ENCODE measurements at regions of chr2 and their contacts with region 1.

Region 1: GRCh38 chr2:168455648-168456520 is at the start of gene CERS6:
- DNase-seq: peak; percentile 95 to 98
- H3K4me3 ChIP-seq: peak within 1 kb of the TSS; percentile 69 to 91
- H3K27ac ChIP-seq: peak within 1 kb of the TSS; percentile 82 to 83
- H3K4me1 ChIP-seq: peaks cover 0 to 26% (median 8%) of the 10 kb centered on the region in 4 donors
- H3K27me3 ChIP-seq: no peaks in the 10 kb centered on the region
- CTCF ChIP-seq: peak in 1 of 2 experiments; percentile 17

Region 2: GRCh38 chr2:168518555-168519066 is 62.7 kb after region 1 on chr2:
- intact Hi-C with region 1: loop called (anchors 5 kb)
- DNase-seq: peak in 1 of 2 donors; percentile 75
- H3K4me3 ChIP-seq: no peak overlapping the region
- H3K27ac ChIP-seq: peak overlapping the region; percentile 56 to 70
- H3K4me1 ChIP-seq: peaks cover 0 to 97% (median 38%) of the 10 kb centered on the region in 4 donors
- H3K27me3 ChIP-seq: no peaks in the 10 kb centered on the region
- CTCF ChIP-seq: no peak

Region 3: GRCh38 chr2:168699844-168700417 is 244.0 kb after region 1 on chr2:
- intact Hi-C with region 1: loop called (anchors 10 kb)
- DNase-seq: peak in 1 of 2 donors; percentile 30
- H3K4me3 ChIP-seq: no peak overlapping the region
- H3K27ac ChIP-seq: no peak overlapping the region
- H3K4me1 ChIP-seq: peaks cover 0 to 5% (median 0%) of the 10 kb centered on the region in 4 donors
- H3K27me3 ChIP-seq: no peaks in the 10 kb centered on the region
- CTCF ChIP-seq: no peak

Measured in tibial artery (tissue), 4 donors.